H1 (cell line): ENCODE measurements at regions of chr12 and their contacts with region 1.

Region 1: GRCh38 chr12:98532681-98533304 is 17.4 kb downstream of the TMPO start:
- DNase-seq: no peak
- H3K4me3 ChIP-seq: no peak overlapping the region
- H3K27ac ChIP-seq: no peak overlapping the region
- H3K4me1 ChIP-seq: no peaks in the 10 kb centered on the region
- H3K27me3 ChIP-seq: no peaks in the 10 kb centered on the region
- CTCF ChIP-seq: peak in 2 of 3 experiments; percentile 55 to 68; a peak in 3 of 4 replicates
- EP300 ChIP-seq: no peak
- POLR2A ChIP-seq: no peak
- RAD21 ChIP-seq: peak in 1 of 2 experiments; percentile 36; a peak in 2 of 4 replicates

Region 2: DNA sequence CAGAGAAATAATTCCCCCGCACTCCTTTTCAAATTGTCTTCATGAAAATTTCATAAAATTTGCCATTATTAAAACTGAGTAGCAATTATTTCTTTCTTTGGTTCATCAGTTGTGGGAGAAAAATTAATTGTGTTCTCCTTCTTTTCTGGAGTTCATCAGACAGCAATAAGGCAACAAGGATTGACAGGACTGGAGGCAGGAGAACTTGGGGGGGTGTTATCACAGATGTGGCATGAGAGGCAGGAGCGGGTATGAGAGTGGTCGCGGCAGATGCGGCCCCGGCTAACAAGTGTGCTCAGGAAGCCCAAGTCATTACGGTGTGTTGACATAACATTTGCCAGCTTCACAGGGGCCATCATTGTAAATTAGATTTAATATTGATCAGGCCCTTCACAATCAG is 324.0 kb before region 1 on chr12:
- CTCF ChIA-PET with region 1: no interaction called
- POLR2A ChIA-PET with region 1: no interaction called
- DNase-seq: no peak
- H3K4me3 ChIP-seq: no peak overlapping the region
- H3K27ac ChIP-seq: no peak overlapping the region
- H3K4me1 ChIP-seq: no peaks in the 10 kb centered on the region; a peak in 1 of 7 replicates
- H3K27me3 ChIP-seq: no peaks in the 10 kb centered on the region
- CTCF ChIP-seq: no peak
- EP300 ChIP-seq: no peak
- POLR2A ChIP-seq: no peak
- RAD21 ChIP-seq: no peak

Region 3: GRCh38 chr12:98509063-98509462 is 23.7 kb before region 1 on chr12:
- CTCF ChIA-PET with region 1: interaction called, 10 read pairs
- POLR2A ChIA-PET with region 1: interaction called, 20 read pairs
- DNase-seq: peak in 1 of 2 experiments; percentile 41
- H3K4me3 ChIP-seq: no peak overlapping the region
- H3K27ac ChIP-seq: no peak overlapping the region
- H3K4me1 ChIP-seq: no peaks in the 10 kb centered on the region; a peak in 2 of 7 replicates
- H3K27me3 ChIP-seq: no peaks in the 10 kb centered on the region
- CTCF ChIP-seq: no peak
- EP300 ChIP-seq: no peak
- POLR2A ChIP-seq: no peak
- RAD21 ChIP-seq: no peak

Region 4: DNA sequence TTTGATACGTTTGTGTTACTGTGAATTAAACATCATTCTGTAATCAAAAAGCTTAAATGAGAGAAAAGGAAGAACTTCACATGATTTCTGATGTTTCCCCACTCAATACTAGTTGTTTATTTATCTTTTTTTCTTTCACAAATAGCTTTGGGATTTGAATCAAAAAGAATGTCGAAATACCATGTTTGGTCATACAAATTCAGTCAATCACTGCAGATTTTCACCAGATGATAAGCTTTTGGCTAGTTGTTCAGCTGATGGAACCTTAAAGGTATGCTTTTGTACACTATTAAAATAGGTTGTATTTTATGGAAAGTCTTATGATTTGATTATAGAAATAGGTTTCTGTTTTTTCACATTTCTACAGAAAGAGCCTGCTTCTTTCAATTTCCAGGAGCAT is 153.8 kb after region 1 on chr12:
- CTCF ChIA-PET with region 1: no interaction called
- POLR2A ChIA-PET with region 1: no interaction called
- DNase-seq: no peak
- H3K4me3 ChIP-seq: no peak overlapping the region
- H3K27ac ChIP-seq: no peak overlapping the region
- H3K4me1 ChIP-seq: no peaks in the 10 kb centered on the region
- H3K27me3 ChIP-seq: no peaks in the 10 kb centered on the region
- CTCF ChIP-seq: no peak
- EP300 ChIP-seq: no peak
- POLR2A ChIP-seq: no peak
- RAD21 ChIP-seq: no peak